ENCODE measurements at regions of chr1 and their contacts with region 1.

Region 1: DNA sequence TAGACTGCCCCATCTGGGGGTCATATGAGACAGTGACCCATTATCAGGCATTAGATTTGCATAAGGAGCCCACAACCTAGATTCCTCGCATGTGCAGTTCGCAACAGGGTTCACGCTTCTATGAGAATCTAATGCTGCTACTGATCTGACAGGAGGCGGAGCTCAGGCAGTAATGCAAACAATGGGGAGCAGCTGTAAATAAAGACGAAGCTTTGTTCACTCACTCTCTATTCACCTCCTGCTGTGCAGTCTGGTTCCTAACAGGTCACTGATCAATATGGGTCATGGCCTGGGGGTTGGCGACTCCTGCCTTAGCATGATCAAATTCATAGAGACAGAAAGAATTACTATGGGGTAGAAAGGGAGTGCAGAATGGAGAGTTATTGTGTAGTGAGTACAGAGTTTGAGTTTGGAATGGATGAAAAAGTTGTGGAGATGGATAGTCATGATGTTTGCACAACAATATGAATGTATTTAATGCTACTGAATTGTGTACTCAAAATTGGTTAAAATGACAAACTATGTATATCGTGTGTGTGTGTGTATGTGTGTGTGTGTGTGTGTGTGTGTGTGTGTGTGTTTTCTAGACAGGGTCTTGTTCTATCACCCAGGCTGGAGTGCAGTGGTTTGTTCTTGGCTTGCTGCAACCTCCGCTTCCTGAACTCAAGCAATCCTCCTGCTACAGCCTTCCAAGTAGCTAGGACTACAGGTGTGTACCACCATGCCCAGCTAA is 42.2 kb downstream of the BTF3L4 start:
- DNase-seq: no peak

Region 2: DNA sequence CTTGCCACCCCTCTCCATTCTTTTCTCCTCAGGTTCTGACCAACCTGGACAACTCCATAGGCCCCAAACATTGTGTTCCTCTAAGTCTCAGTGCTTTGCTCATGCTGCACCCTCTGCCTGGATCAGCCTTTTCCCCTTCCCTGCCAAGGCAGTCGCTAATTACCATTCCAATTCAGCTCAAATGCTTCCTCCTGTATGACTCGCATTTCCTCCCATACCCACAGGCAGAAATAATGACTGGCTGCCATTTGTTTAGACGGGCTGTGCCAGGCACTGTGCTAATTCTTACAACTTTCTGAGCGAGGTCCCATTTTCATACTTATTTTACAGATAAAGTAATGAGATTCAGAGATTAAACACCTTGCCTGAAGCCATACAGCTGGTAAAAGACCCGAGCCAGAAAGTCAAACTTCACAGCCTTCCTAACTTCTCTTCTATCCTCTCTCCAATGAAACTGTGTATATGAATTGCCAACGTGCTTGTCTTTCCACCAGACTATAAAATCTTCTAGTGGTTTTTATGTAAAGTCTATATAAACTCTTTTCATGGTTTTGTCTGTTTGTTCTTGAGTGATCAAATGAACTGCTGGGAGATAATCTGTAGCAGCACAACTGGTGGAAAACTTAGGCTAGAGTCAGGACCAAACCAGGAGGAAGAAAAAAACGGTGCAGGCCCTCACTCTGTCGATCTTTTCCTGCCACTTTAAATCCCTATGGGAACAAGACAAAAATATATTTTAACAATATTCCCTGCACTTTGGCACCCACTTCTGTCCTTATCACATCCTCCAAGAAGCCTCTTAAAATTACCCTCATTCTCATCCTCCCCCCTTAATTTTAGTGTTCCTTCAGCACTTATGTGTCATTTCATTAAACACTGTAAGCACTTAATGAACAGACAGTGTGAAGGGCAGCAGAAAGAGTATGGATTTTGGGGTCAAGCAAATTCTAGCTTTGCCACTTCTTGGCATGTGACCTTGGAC is 141.5 kb before region 1 on chr1:
- intact Hi-C with region 1: no loop called
- DNase-seq: no peak

Region 3: DNA sequence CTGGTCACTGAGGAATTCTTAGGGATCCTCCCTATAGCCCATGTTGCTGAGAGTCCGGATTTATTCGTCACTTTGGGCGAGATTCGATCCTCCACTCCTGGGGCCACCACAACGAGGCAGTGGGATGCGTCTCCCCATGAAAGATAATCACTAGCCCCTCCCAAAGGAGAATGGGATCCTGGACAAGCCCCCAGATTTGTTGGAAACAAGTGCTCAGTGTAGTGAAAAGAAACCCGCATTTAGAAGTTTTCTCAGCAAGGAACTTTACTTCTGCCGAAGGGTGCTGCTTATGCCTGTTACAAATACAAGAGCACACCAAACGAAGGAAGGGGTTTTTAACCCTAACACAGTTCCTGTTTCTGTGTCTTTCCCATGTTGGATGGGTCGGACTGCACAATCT is 126.9 kb after region 1 on chr1:
- intact Hi-C with region 1: loop called in 1 of 2 experiments (anchors 2 kb)
- DNase-seq: no peak